ENCODE measurements at regions of chr14 and their contacts with region 1.

Region 1: DNA sequence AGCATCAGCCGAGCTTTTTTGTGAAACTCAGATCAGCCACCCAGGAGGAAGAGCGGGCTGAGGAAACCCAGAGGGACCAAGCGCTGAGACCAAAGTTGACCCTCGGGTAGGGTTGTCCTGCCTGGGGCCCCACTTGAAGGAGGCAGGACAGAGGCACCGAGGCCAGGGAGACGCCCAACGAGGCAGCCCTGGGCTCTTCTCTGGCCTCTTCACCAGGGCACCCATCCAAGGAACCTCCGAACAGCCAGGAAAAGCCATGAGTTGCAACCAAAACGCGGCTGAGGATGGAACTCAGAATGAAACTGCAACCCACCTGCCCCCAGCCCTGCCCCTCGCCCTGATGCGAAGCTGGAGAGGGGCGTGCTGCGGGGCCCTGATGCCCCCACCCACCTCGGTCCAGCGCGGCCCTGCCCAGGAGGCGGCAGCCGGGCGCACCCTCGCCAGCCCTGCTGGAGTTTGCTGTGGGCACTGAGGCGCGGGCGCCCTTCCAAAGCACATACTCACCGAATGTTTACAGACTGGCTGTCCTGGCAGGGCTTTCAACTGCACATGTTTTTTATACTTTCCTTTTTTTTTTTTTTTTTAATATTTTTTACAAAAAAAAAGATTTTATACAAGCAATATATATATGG is 41.9 kb downstream of the JDP2 start:
- DNase-seq: no peak
- H3K4me3 ChIP-seq: no peak overlapping the region
- H3K27ac ChIP-seq: no peak overlapping the region
- H3K4me1 ChIP-seq: no peaks in the 10 kb centered on the region
- H3K27me3 ChIP-seq: no peaks in the 10 kb centered on the region
- CTCF ChIP-seq: no peak

Region 2: DNA sequence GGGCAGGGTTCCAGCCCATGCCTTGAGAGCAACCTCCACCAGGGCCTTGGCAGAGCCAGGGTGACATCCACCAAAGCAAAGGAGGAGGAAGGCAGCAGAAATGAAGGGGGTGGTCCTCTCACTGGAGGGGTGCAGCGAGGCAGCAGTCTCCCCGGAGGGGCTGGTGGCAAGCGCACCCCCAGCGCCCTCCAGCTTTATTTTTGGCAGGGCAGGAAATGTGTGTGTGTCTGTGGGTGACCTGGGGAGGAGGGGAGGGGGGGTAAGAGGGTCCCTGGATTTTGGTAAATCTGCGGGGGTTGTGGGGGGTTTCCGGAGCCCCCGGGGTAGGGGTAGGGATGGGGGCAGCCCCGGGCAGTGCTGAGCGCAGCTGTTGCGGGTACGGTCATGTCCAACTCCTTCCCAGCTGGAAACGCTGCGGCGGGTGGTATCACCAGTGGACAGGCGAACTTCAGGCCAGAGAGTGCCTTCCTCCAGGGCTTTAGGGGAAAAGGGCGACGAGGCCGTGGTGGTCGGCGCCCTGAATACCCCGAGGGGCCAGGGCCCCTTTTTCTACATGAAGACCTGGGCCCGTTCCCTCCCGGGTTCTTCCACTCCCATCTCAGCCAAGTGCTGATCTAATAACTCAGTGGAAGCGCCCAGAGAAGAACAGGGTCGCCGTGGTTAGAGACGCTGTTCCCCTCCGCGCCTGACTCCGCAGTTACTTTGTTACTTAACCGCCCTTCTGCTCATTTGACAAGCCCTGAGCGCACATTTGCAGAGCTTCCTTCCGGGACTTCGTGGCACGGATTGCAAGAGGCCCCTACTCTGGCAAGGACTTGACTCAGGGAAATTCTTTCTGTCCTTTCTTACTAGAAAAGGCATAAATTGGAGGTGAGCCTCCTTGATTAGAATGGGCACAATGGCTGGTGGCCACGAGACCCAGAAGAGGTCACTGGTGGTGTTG is 135.8 kb before region 1 on chr14:
- CTCF ChIA-PET with region 1: no interaction called
- dilution Hi-C with region 1: loop called (anchors 5 kb)
- in situ Hi-C with region 1: no loop called
- intact Hi-C with region 1: no loop called
- DNase-seq: no peak
- H3K4me3 ChIP-seq: no peak overlapping the region
- H3K27ac ChIP-seq: no peak overlapping the region
- H3K4me1 ChIP-seq: no peaks in the 10 kb centered on the region
- H3K27me3 ChIP-seq: no peaks in the 10 kb centered on the region
- CTCF ChIP-seq: no peak

Region 3: DNA sequence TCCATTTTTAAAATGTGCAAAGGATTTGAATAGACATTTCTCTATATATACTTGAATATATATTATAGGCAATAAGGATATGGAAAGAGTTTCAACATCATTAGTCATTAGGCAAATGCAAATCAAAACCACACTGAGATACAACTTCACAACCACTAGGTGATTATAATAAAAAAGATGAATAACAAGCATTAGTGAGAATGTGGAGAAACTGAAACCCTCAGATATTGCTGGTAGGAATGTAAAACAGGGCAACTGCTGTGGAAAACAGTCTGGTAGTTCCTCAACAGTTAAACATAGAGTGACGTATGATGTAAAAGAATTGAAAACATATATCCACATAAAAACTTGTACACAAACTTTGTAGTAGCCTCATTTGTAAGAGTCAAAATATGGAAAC is 40.8 kb after region 1 on chr14:
- CTCF ChIA-PET with region 1: no interaction called
- dilution Hi-C with region 1: no loop called
- in situ Hi-C with region 1: no loop called
- intact Hi-C with region 1: no loop called
- DNase-seq: no peak
- H3K4me3 ChIP-seq: no peak overlapping the region
- H3K27ac ChIP-seq: no peak overlapping the region
- H3K4me1 ChIP-seq: peaks cover 3% of the 10 kb centered on the region
- H3K27me3 ChIP-seq: no peaks in the 10 kb centered on the region
- CTCF ChIP-seq: no peak

Region 4: DNA sequence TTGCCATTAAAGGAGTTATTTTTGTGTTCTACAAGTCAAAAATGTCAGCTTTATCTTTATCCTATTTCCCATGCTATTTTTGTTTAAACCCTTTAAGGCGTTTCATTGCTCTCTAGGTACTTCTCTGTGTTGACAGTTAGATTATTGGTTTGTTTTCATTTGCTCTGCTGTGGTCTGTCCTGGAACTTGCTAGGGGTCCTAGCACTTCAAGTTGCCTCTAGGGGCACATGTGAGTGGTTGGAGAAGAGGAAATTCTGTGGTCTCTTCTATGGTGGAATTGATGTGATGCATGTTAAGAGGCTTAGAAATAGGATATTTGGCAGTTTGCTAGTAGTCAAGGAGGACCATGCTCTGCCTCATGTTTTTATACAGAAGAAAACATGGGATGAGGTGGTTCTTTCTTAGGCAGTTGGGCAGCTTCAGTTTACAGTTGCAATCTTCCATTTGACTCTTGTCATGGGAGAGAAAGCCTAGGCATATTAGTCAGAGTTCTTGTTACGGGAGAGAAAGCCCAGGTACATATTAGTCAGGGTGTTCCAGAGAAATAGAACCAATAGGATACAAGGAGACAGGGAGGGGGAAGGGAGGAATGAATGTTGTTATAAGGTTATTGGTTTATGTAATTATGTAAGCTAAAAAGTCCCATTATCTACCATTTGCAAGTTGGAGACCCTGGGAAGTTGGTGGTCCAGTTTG is 205.7 kb after region 1 on chr14:
- CTCF ChIA-PET with region 1: no interaction called
- dilution Hi-C with region 1: no loop called
- in situ Hi-C with region 1: no loop called
- intact Hi-C with region 1: no loop called
- DNase-seq: peak; percentile 82
- H3K4me3 ChIP-seq: no peak overlapping the region
- H3K27ac ChIP-seq: peak overlapping the region; percentile 23
- H3K4me1 ChIP-seq: peaks cover 11% of the 10 kb centered on the region
- H3K27me3 ChIP-seq: no peaks in the 10 kb centered on the region
- CTCF ChIP-seq: peak; percentile 35 to 36

Region 5: GRCh38 chr14:76168531-76168930 is 698.8 kb after region 1 on chr14:
- CTCF ChIA-PET with region 1: no interaction called
- dilution Hi-C with region 1: no loop called
- in situ Hi-C with region 1: no loop called
- intact Hi-C with region 1: no loop called
- DNase-seq: peak; percentile 9
- H3K4me3 ChIP-seq: no peak overlapping the region
- H3K27ac ChIP-seq: no peak overlapping the region
- H3K4me1 ChIP-seq: no peaks in the 10 kb centered on the region
- H3K27me3 ChIP-seq: no peaks in the 10 kb centered on the region
- CTCF ChIP-seq: no peak

Measured in mammary epithelial cell (primary cell).